ENCODE measurements at regions of chr7 and their contacts with region 1.

Region 1: GRCh38 chr7:1503816-1504775 is at the start of gene INTS1:
- DNase-seq: peak; percentile 95
- ATAC-seq: peak; percentile 88
- H3K4me3 Mint-ChIP-seq: peak within 1 kb of the TSS; percentile 85
- H3K27ac Mint-ChIP-seq: peak within 1 kb of the TSS; percentile 87
- H3K4me1 Mint-ChIP-seq: peaks cover 41% of the 10 kb centered on the region
- H3K27me3 Mint-ChIP-seq: no peaks in the 10 kb centered on the region
- total RNA-seq, gene INTS1: 78.1 to 81.7 TPM

Region 2: DNA sequence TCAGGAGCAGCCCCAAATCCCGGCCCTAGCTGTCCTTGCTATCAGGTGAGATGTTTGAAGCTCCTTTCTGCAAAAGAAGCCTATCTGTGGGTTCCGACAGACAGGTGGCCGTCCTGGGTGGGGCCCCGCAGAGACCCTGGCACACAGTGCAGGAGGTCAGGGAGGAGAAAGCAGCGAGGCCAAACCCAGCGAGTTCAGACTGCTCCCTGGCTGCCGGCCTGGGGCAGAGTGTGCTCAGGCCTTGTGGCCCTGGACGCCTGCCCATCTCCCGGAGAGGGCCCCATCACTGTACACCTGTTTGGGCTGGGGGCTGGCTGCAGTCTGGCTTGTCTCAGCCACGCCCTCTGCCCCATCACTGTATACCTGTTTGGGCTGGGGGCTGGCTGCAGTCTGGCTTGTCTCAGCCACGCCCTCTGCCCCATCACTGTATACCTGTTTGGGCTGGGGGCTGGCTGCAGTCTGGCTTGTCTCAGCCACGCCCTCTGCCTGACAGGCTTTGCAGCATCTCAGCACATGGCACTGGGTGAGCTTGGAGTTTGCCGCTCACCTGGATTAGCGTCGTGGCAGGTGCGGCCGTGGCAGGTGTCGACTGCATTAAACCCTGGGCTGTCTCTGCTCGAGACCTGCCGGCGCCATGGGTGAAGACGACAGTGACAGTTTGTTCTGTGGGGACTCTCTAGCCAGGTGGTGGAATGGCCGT is 765.2 kb before region 1 on chr7:
- CTCF ChIA-PET with region 1: no interaction called
- POLR2A ChIA-PET with region 1: no interaction called
- intact Hi-C with region 1: no loop called
- DNase-seq: no peak
- ATAC-seq: no peak
- H3K4me3 Mint-ChIP-seq: no peak overlapping the region
- H3K27ac Mint-ChIP-seq: no peak overlapping the region
- H3K4me1 Mint-ChIP-seq: no peaks in the 10 kb centered on the region
- H3K27me3 Mint-ChIP-seq: no peaks in the 10 kb centered on the region

Region 3: DNA sequence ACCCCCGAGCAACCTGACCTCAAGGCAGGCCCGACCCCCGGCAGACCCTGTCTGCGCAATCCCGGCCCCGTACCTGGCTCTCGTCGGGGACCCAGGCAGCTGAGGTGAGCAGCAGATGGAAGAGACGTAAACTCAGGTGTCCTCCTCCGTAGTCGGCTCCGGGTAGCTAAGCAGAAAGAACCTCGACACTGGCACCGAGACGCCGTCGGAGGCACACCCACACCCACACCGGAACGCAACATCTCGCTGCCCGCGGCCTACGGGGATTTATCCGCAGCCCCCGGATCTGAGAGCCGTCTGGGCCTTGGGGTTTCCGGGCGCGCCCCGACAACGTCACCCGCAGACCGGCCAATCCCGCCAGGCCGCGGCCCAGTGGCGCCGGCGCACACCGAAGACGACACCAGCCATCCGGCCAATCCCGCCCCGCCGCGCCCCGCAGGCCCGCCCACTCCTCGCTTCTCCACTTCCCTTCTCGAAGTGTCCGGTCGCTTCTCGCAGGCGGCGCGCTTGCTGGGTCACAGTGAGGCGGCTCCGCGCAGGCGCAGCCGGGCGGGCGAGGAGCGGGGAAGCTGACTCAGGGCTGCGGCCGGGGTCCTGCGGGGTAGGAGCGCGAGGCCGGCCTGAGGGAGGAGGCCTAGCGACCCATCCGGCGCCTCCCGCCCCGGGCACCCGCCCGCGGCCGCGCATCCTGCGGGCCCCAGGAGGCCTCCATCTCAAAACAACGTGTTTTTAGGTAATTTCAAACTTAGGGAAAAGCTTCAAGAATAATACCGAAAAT is 344.0 kb before region 1 on chr7 and contains the start of gene ZFAND2A:
- CTCF ChIA-PET with region 1: no interaction called
- POLR2A ChIA-PET with region 1: no interaction called
- intact Hi-C with region 1: loop called in 1 of 2 experiments (anchors 1 kb)
- DNase-seq: peak; percentile 99
- ATAC-seq: peak; percentile 98
- H3K4me3 Mint-ChIP-seq: peak within 1 kb of the TSS; percentile 84
- H3K27ac Mint-ChIP-seq: peak within 1 kb of the TSS; percentile 90
- H3K4me1 Mint-ChIP-seq: peaks cover 22% of the 10 kb centered on the region
- H3K27me3 Mint-ChIP-seq: no peaks in the 10 kb centered on the region
- total RNA-seq, gene ZFAND2A: 21.6 to 25.2 TPM

Region 4: GRCh38 chr7:1555809-1556540 is 51.9 kb after region 1 on chr7 and contains the start of gene TMEM184A:
- CTCF ChIA-PET with region 1: interaction called, 3 read pairs
- POLR2A ChIA-PET with region 1: no interaction called
- intact Hi-C with region 1: loop called in 1 of 2 experiments (anchors 2 kb)
- DNase-seq: peak; percentile 75
- ATAC-seq: peak; percentile 88
- H3K4me3 Mint-ChIP-seq: no peak within 1 kb of the TSS
- H3K27ac Mint-ChIP-seq: no peak within 1 kb of the TSS
- H3K4me1 Mint-ChIP-seq: no peaks in the 10 kb centered on the region
- H3K27me3 Mint-ChIP-seq: no peaks in the 10 kb centered on the region
- total RNA-seq, gene TMEM184A: 0.05 to 0.14 TPM

Region 5: DNA sequence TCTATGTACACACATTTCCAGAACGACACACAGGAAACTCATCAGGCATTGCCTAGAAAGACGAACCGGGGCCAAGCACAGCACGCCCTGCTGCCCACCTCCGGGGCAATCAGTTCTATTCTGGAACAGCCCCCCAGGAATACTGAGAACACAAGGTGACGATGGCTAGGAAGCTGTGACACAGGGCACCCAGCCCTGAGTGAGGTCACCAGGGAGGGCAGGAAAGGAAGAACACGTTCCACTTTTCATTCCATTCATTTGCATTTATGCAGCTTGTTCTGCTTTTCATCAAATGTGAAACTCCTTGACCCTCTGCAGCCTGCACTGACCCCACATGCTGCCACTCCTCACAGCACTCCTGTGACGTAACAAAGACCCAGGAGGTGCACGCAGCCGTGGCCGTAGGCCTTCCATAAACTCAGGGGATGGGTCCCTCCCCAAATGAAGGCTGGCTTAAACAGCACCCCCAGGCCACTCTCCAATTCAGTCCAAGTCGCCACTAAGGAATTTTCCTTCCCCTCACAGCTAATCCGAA is 699.7 kb after region 1 on chr7:
- CTCF ChIA-PET with region 1: no interaction called
- POLR2A ChIA-PET with region 1: no interaction called
- intact Hi-C with region 1: no loop called
- DNase-seq: no peak
- ATAC-seq: no peak
- H3K4me3 Mint-ChIP-seq: no peak overlapping the region
- H3K27ac Mint-ChIP-seq: no peak overlapping the region
- H3K4me1 Mint-ChIP-seq: no peaks in the 10 kb centered on the region
- H3K27me3 Mint-ChIP-seq: no peaks in the 10 kb centered on the region

Measured in activated CD4-positive, alpha-beta T cell treated with anti-CD3 and anti-CD28 coated beads for 36 hours (primary cell).